Activated CD4-positive, alpha-beta memory T cell treated with anti-CD3 and anti-CD28 coated beads, Interleukin-2, amount 10 ng/mL, durations not matched to agents 7 days and 5 days (primary cell): ENCODE measurements at regions of chr6 and their contacts with region 1.

Region 1: GRCh38 chr6:144582939-144583613 is 297.9 kb downstream of the UTRN start:
- DNase-seq: peak; percentile 67
- H3K4me3 Mint-ChIP-seq: peak overlapping the region; percentile 77
- H3K27ac Mint-ChIP-seq: peak overlapping the region; percentile 92
- H3K4me1 Mint-ChIP-seq: peaks cover 65% of the 10 kb centered on the region
- H3K27me3 Mint-ChIP-seq: no peaks in the 10 kb centered on the region

Region 2: GRCh38 chr6:144559865-144560593 is 23.0 kb before region 1 on chr6:
- CTCF ChIA-PET with region 1: interaction called, 4 read pairs
- POLR2A ChIA-PET with region 1: interaction called, 14 read pairs
- DNase-seq: peak; percentile 56
- H3K4me3 Mint-ChIP-seq: peak overlapping the region; percentile 49
- H3K27ac Mint-ChIP-seq: peak overlapping the region; percentile 80
- H3K4me1 Mint-ChIP-seq: peaks cover 31% of the 10 kb centered on the region
- H3K27me3 Mint-ChIP-seq: no peaks in the 10 kb centered on the region

Region 3: DNA sequence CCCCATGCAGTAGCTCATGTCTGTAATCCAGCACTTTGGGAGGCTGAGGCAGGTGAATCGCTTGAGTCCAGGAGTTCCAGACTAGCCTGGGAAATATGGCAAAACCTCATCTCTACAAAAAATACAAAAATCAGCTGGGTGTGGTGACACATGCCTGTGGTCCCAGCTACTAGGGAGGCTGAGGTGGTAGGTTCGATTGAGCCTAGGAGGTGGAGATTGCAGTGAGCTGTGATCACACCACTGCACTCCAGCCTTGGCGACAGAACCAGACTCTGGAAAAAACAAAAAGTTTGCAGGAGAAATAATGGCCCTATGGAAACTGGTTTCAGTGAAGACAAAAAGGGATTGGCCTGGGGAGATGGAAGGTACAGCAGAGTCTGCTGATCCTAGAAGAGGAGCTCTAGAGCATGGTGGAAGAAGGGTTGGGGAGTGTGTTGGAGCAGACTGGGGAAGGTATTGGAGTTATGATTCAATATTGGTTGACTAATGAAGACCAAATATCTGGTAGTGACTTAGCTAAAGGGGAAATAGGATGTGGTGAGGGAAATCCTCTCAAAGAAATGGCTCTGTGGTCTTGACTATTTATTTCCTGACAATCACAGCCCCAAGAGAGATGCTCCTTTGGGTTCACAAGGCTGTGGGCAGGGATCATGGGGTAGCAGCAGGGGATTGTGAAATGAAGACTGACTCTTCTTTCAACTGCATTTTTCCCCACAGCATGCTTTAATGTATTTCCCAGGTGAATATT is 16.0 kb before region 1 on chr6:
- CTCF ChIA-PET with region 1: interaction called, 5 read pairs
- POLR2A ChIA-PET with region 1: interaction called, 17 read pairs
- DNase-seq: peak; percentile 35
- H3K4me3 Mint-ChIP-seq: no peak overlapping the region
- H3K27ac Mint-ChIP-seq: no peak overlapping the region
- H3K4me1 Mint-ChIP-seq: peaks cover 9% of the 10 kb centered on the region
- H3K27me3 Mint-ChIP-seq: no peaks in the 10 kb centered on the region

Region 4: DNA sequence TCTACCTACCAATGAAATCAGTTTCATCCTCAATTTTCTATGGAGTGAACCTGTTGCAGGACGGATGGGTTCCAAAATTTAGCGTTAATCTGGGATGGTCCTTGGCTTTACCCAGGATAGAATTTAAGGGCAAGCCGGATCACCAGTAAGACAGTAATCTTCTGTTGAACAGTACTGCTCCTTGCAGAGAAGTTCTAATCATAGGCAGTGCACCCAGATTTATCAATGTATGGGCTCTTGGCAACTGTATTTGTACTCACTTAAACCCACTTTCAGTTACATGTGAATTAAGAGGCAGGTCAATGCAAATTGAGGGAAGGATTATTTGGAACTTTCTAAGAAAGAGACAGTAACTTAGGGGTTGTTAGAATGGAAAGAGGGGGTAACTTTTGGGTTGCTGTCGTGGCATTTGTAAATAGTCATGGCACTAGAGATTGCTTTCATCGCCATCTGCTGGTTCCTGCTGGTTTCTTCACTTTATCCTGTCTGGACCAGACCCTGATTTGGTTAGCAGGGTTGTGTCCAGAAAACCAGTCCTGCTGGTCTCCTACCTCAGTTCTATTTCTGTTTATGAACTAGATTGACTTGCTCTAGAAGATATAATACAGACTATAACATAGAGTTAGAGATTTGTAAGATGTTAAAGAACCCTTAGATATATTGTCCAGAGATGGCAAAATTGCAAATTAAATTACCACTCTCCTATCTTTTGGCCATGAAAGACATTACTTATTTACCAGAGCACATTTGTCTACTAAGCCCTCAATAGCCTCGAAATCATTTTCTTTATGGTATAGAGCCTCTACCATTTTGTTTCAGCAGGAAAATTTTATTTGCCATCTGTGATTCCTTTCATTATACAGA is 348.3 kb after region 1 on chr6:
- CTCF ChIA-PET with region 1: interaction called, 12 read pairs
- POLR2A ChIA-PET with region 1: no interaction called
- DNase-seq: peak; percentile 44
- H3K4me3 Mint-ChIP-seq: no peak overlapping the region
- H3K27ac Mint-ChIP-seq: no peak overlapping the region
- H3K4me1 Mint-ChIP-seq: no peaks in the 10 kb centered on the region
- H3K27me3 Mint-ChIP-seq: peaks cover 3% of the 10 kb centered on the region